AG04450 (cell line): ENCODE measurements at regions of chr1 and their contacts with region 1.

Region 1: GRCh38 chr1:94039514-94039870 is 81.5 kb downstream of the ABCA4 start:
- DNase-seq: no peak
- H3K4me3 ChIP-seq: no peak overlapping the region
- H3K27ac ChIP-seq: no peak overlapping the region
- H3K27me3 ChIP-seq: no peaks in the 10 kb centered on the region
- CTCF ChIP-seq: peak; percentile 83

Region 2: GRCh38 chr1:93716941-93717368 is 322.5 kb before region 1 on chr1:
- CTCF ChIA-PET with region 1: no interaction called
- POLR2A ChIA-PET with region 1: no interaction called
- DNase-seq: no peak
- H3K4me3 ChIP-seq: no peak overlapping the region
- H3K27ac ChIP-seq: no peak overlapping the region
- H3K27me3 ChIP-seq: no peaks in the 10 kb centered on the region
- CTCF ChIP-seq: no peak

Region 3: GRCh38 chr1:93758842-93759515 is 280.5 kb before region 1 on chr1:
- CTCF ChIA-PET with region 1: no interaction called
- POLR2A ChIA-PET with region 1: no interaction called
- DNase-seq: no peak
- H3K4me3 ChIP-seq: no peak overlapping the region
- H3K27ac ChIP-seq: peak overlapping the region; percentile 57
- H3K27me3 ChIP-seq: no peaks in the 10 kb centered on the region
- CTCF ChIP-seq: peak; percentile 35

Region 4: GRCh38 chr1:93937997-93938396 is 101.5 kb before region 1 on chr1:
- CTCF ChIA-PET with region 1: no interaction called
- POLR2A ChIA-PET with region 1: no interaction called
- DNase-seq: no peak
- H3K4me3 ChIP-seq: no peak overlapping the region
- H3K27ac ChIP-seq: no peak overlapping the region
- H3K27me3 ChIP-seq: peaks cover 10% of the 10 kb centered on the region
- CTCF ChIP-seq: no peak

Region 5: DNA sequence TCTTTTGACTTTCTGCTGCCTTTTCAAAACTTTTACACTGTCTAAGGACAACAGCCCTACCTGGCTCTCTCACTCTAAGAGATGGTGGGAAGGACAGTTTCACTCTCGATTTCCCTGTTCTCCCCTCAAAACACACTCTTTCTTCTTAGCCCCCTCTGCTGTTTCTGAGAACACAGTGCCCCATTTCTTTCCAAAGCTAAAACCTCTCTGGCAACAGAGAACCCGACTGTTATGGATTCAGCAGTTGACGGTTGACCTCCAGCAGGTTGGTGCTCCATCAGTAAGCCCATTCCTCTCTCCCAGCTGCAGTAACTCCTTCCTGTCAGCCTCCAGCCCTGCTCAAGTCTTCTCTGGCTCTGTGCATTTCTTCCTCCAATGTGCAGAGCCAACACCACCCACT is 290.5 kb after region 1 on chr1:
- CTCF ChIA-PET with region 1: interaction called, 472 read pairs
- POLR2A ChIA-PET with region 1: interaction called, 3 read pairs
- DNase-seq: no peak
- H3K4me3 ChIP-seq: no peak overlapping the region
- H3K27ac ChIP-seq: no peak overlapping the region
- H3K27me3 ChIP-seq: no peaks in the 10 kb centered on the region
- CTCF ChIP-seq: peak; percentile 68